SK-N-SH (cell line): ENCODE measurements at regions of chr7 and their contacts with region 1.

Region 1: GRCh38 chr7:135672560-135673359 is 10.4 kb downstream of the STMP1 start:
- DNase-seq: peak; percentile 70
- H3K4me3 ChIP-seq: no peak overlapping the region
- H3K27ac ChIP-seq: peak overlapping the region; percentile 71 to 77
- H3K4me1 ChIP-seq: peaks cover 6 to 30% of the 10 kb centered on the region in 2 experiments; a peak in 3 of 4 replicates
- H3K27me3 ChIP-seq: no peaks in the 10 kb centered on the region
- CTCF ChIP-seq: peak; percentile 99
- EP300 ChIP-seq: no peak
- RAD21 ChIP-seq: peak; percentile 93

Region 2: GRCh38 chr7:135662373-135663114 is 10.2 kb before region 1 on chr7 and contains the start of gene STMP1:
- CTCF ChIA-PET with region 1: interaction called, 72 read pairs
- POLR2A ChIA-PET with region 1: interaction called, 5 read pairs
- DNase-seq: peak; percentile 100
- H3K4me3 ChIP-seq: peak within 1 kb of the TSS; percentile 73 to 96
- H3K27ac ChIP-seq: peak within 1 kb of the TSS; percentile 92 to 97
- H3K4me1 ChIP-seq: peaks cover 10 to 11% of the 10 kb centered on the region in 2 experiments
- H3K27me3 ChIP-seq: no peaks in the 10 kb centered on the region
- CTCF ChIP-seq: no peak
- EP300 ChIP-seq: peak; percentile 20 to 40; a peak in 2 of 4 replicates
- RAD21 ChIP-seq: peak; percentile 62
- polyA plus RNA-seq, gene STMP1: 26.0 and 30.0 TPM in 2 replicates

Region 3: DNA sequence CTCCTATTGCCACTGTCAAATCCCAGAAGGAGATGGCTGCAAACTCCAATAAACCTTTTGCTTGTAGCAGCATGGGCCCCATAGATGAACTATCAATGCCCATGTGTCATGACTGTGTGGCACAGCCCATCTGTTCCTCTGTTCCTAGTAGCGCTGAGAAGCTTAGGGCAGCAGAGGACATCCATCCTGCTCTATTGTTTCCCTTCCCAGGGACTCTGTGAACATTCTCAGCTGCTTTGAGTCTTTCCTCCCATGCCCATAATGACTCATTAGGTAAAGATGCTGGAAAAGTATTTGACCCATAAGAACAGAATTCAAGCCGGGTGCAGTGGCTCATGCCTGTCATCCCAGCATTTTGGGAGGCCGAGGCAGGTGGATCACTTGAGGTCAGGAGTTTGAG is 17.8 kb after region 1 on chr7:
- CTCF ChIA-PET with region 1: interaction called, 15 read pairs
- POLR2A ChIA-PET with region 1: no interaction called
- DNase-seq: no peak
- H3K4me3 ChIP-seq: no peak overlapping the region
- H3K27ac ChIP-seq: peak overlapping the region in 1 of 2 experiments; percentile 54; a peak in 2 of 4 replicates
- H3K4me1 ChIP-seq: peaks cover under 1 to 21% of the 10 kb centered on the region in 2 experiments; a peak in 2 of 4 replicates
- H3K27me3 ChIP-seq: no peaks in the 10 kb centered on the region
- CTCF ChIP-seq: no peak
- EP300 ChIP-seq: no peak
- RAD21 ChIP-seq: no peak

Region 4: DNA sequence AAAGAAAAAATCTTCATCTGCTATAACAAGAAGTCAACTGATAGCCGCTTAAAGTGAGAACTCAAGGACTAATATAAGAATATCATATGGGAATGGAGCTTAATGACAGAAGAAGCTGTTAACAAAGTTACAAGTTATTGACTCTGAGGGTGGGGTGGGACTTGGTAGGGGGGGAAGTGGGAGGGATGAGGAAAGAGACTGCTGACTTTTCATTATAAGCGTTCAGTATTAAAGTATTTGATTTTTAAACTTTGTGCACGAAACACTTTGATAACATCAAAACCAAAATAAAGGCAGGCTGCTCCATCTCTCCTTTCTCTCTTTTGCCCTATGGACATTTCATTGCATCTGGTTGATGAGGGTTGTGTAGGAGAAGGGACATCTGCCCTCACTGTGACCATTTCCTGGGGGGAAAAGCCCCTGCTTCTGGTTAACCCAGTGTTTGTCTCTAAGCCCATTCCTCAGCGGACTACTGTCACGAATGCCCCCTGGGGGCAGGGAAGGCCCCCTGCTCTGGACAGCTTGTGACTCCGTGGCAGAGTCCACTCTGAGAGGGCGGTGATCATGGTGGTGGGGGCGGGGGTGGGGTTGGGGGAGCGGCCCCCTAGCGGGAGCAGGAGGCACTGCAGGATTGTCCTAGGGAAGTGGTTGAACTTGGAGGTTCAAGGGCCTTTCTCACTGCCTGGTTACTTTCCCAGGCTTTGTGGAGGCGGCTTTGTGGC is 37.8 kb after region 1 on chr7:
- CTCF ChIA-PET with region 1: interaction called, 153 read pairs
- POLR2A ChIA-PET with region 1: no interaction called
- DNase-seq: peak; percentile 83
- H3K4me3 ChIP-seq: no peak overlapping the region
- H3K27ac ChIP-seq: peak overlapping the region in 1 of 2 experiments; percentile 93; a peak in 1 of 4 replicates
- H3K4me1 ChIP-seq: peaks cover 25 to 41% of the 10 kb centered on the region in 2 experiments
- H3K27me3 ChIP-seq: no peaks in the 10 kb centered on the region
- CTCF ChIP-seq: peak; percentile 64
- EP300 ChIP-seq: no peak
- RAD21 ChIP-seq: no peak

Region 5: GRCh38 chr7:136009488-136010079 is 336.8 kb after region 1 on chr7:
- CTCF ChIA-PET with region 1: interaction called, 64 read pairs
- POLR2A ChIA-PET with region 1: no interaction called
- DNase-seq: peak; percentile 55
- H3K4me3 ChIP-seq: no peak overlapping the region; a peak in 1 of 4 replicates
- H3K27ac ChIP-seq: no peak overlapping the region
- H3K4me1 ChIP-seq: no peaks in the 10 kb centered on the region; a peak in 1 of 4 replicates
- H3K27me3 ChIP-seq: no peaks in the 10 kb centered on the region
- CTCF ChIP-seq: peak; percentile 98
- EP300 ChIP-seq: no peak
- RAD21 ChIP-seq: peak; percentile 94